Stomach (tissue), 19 donors: ENCODE measurements at regions of chr17 and their contacts with region 1.

Region 1: GRCh38 chr17:74659898-74660297 is 36.4 kb upstream of the CD300E start:
- DNase-seq: no peak
- H3K4me3 ChIP-seq: no peak overlapping the region
- H3K27ac ChIP-seq: no peak overlapping the region
- H3K4me1 ChIP-seq: no peaks in the 10 kb centered on the region
- H3K27me3 ChIP-seq: peaks cover 0 to 77% (median 10%) of the 10 kb centered on the region in 3 donors
- CTCF ChIP-seq: no peak
- EP300 ChIP-seq: no peak
- POLR2A ChIP-seq: no peak

Region 2: DNA sequence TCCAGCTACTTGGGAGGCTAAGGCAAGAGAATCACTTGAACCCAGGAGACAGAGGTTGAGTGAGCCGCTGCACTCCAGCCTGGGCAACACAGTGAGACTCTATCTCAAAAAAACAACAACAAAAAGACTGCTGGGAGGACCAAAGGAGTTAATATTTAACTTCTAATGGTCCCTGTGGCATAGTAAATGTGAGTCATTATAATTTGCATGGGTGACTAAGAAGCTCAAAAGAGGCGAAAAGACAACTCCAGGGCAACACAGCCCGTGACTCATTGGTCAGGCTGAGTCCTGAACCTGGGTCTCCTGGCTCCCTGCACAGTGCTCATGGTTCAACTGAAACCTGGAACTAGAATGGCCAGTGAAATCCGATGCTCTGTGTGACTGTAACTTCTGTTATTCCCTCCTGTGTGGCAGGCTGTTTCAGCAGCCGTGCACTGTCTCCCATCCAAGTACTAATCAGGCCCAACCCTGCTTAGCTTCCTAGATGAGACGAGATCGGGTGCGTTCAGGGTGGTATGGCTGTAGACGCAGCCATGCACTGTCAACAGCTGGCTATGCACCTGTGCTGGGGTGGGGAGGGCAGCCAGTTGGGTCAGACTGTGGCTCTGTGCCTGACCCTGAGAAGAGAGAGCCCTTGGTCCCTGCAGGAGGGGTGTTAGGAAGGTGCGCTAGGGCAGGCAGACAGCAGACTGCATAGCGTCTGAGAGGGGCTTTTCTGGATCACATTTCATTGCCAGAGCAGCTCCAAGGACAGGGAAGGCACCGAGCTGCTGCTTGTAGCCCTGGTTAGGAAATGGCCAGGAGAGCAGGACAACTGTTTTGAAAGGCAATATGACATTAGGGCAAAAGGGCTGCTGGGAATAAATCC is 242.5 kb before region 1 on chr17:
- intact Hi-C with region 1: no loop called
- DNase-seq: peak; percentile 43 to 59
- H3K4me3 ChIP-seq: no peak overlapping the region
- H3K27ac ChIP-seq: peak overlapping the region; percentile 54 to 68 (median 66)
- H3K4me1 ChIP-seq: peaks cover 5 to 29% (median 18%) of the 10 kb centered on the region in 4 donors
- H3K27me3 ChIP-seq: no peaks in the 10 kb centered on the region
- CTCF ChIP-seq: no peak
- EP300 ChIP-seq: no peak
- POLR2A ChIP-seq: no peak

Region 3: GRCh38 chr17:74736513-74737298 is 76.8 kb after region 1 on chr17 and contains the start of gene RAB37:
- intact Hi-C with region 1: loop called (anchors 10 kb)
- DNase-seq: peak; percentile 54 to 84
- H3K4me3 ChIP-seq: peak within 1 kb of the TSS; percentile 34 to 56 (median 46)
- H3K27ac ChIP-seq: peak within 1 kb of the TSS; percentile 46 to 72 (median 60)
- H3K4me1 ChIP-seq: peaks cover 25 to 58% (median 35%) of the 10 kb centered on the region in 4 donors
- H3K27me3 ChIP-seq: peaks cover 9 to 77% (median 31%) of the 10 kb centered on the region in 3 donors
- CTCF ChIP-seq: peak in 2 of 7 experiments; percentile 7 to 52
- EP300 ChIP-seq: no peak
- POLR2A ChIP-seq: no peak
- total RNA-seq, gene RAB37: 2.0 to 8.7 TPM in 2 of 5 donors, not detected in the others